ENCODE measurements at regions of chr10 and their contacts with region 1.

Region 1: DNA sequence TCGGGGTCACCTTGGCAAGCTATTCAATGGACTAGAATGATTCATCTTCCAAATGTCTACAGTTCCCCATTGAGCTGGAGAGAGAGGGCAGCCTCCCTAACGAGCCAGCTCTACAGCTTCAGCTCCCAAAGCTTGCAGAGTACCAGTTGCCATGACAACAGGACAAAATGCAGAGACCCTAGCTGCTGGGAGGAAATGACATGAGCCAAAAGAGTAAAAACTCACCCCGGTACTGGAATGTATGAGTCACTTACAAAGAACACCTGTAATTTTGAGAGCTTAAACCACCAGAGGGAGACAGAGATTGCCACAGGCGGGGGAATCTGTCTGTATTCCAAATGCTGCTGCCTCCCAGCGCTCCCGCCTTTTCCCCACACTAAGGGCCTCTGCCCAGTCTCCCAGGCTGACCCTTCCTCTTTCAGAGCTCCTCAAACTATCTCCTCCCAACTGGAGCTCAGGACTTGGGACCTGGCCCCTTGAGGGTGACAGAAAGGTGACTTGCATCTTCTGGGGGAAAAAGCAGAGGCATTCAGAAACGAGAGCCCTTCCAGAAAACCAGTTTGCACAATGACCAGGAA is 95.5 kb downstream of the CUL2 start:
- DNase-seq: peak; percentile 40
- H3K4me3 ChIP-seq: no peak overlapping the region
- H3K27ac ChIP-seq: no peak overlapping the region
- H3K4me1 ChIP-seq: peaks cover 0 to 6% (median 3%) of the 10 kb centered on the region in 4 donors
- H3K27me3 ChIP-seq: no peaks in the 10 kb centered on the region
- CTCF ChIP-seq: peak; percentile 46 to 60 (median 57)
- EP300 ChIP-seq: no peak
- POLR2A ChIP-seq: no peak

Region 2: DNA sequence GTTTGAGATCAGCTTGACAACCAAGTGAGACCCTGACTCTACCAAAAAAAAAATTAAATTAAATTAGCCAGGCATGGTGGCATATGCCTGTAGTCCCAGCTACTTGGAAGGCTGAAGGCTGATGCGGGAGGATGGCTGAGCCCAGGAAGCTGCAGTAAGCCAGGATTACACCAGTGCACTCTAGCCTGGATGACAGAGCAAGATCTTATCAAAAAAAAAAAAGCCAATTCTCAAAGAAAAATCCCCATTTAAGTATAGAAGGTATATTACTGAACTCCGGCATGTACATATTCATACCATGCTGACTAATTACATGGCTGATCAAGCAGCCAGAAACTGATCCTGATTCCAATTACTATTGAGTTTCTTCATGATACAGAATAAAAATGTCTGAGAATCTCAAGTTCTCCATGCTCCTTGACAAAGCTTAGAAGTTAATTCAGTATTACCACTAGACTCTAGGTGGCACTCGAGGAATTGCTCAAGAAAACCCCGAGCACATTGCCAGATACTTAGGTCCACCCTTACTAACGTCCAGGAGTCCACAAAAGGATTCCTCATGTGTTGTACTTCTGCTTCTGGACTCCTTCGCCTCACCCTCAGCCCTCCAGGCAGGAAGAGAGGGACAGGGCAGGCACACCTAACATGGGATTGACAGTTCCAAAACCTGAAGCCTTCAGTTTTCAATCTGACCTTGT is 328.5 kb before region 1 on chr10:
- in situ Hi-C with region 1: loop called in 3 of 4 experiments (anchors 25 kb)
- intact Hi-C with region 1: no loop called
- DNase-seq: peak; percentile 37
- H3K4me3 ChIP-seq: no peak overlapping the region
- H3K27ac ChIP-seq: no peak overlapping the region
- H3K4me1 ChIP-seq: peaks cover 0 to 25% (median 8%) of the 10 kb centered on the region in 4 donors
- H3K27me3 ChIP-seq: no peaks in the 10 kb centered on the region
- CTCF ChIP-seq: peak; percentile 48 to 59 (median 54)
- EP300 ChIP-seq: no peak
- POLR2A ChIP-seq: no peak

Region 3: DNA sequence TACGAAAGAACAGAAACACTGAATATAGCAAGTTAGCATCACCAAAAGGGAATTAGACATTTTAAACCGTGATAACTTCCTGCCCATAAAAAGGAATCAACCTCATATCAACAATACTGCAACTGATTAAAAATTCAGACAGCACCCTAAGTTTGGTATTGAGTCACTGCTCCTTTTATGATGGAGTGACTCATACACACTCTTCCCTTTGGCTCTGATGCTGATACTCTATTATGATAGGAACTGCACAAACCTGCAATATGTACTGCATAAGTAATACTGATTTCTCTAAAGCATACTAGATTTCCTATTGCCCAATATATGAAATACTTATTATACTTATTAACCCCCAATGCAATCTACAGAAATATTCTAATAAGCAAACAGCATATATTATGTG is 298.2 kb before region 1 on chr10:
- in situ Hi-C with region 1: loop called in 1 of 4 experiments (anchors 25 kb)
- intact Hi-C with region 1: no loop called
- DNase-seq: no peak
- H3K4me3 ChIP-seq: no peak overlapping the region
- H3K27ac ChIP-seq: no peak overlapping the region
- H3K4me1 ChIP-seq: peaks cover 4 to 20% (median 15%) of the 10 kb centered on the region in 4 donors
- H3K27me3 ChIP-seq: no peaks in the 10 kb centered on the region
- CTCF ChIP-seq: no peak
- EP300 ChIP-seq: no peak
- POLR2A ChIP-seq: no peak

Region 4: GRCh38 chr10:35136263-35136815 is 141.7 kb after region 1 on chr10:
- in situ Hi-C with region 1: no loop called
- intact Hi-C with region 1: no loop called
- DNase-seq: no peak
- H3K4me3 ChIP-seq: no peak overlapping the region
- H3K27ac ChIP-seq: no peak overlapping the region
- H3K4me1 ChIP-seq: peaks cover 0 to 4% (median 0%) of the 10 kb centered on the region in 4 donors
- H3K27me3 ChIP-seq: no peaks in the 10 kb centered on the region
- CTCF ChIP-seq: no peak
- EP300 ChIP-seq: no peak
- POLR2A ChIP-seq: no peak

Region 5: GRCh38 chr10:35218339-35218955 is 223.8 kb after region 1 on chr10:
- in situ Hi-C with region 1: loop called in 1 of 4 experiments (anchors 25 kb)
- intact Hi-C with region 1: no loop called
- DNase-seq: peak; percentile 83
- H3K4me3 ChIP-seq: no peak overlapping the region
- H3K27ac ChIP-seq: peak overlapping the region in 3 of 4 donors; percentile 2 to 33 (median 27)
- H3K4me1 ChIP-seq: peaks cover 0 to 22% (median 0%) of the 10 kb centered on the region in 4 donors
- H3K27me3 ChIP-seq: no peaks in the 10 kb centered on the region
- CTCF ChIP-seq: peak; percentile 80 to 85 (median 82)
- EP300 ChIP-seq: no peak
- POLR2A ChIP-seq: no peak

Measured in transverse colon (tissue), 4 donors.